ENCODE measurements at regions of chr3 and their contacts with region 1.

Region 1: GRCh38 chr3:129003578-129004160 is 2.6 kb downstream of the EFCC1 start:
- DNase-seq: peak; percentile 46 to 70 (median 62)
- ATAC-seq: peak; percentile 94
- H3K4me3 ChIP-seq: no peak overlapping the region
- H3K4me3 Mint-ChIP-seq: peak overlapping the region; percentile 55 to 84 (median 72)
- H3K27ac ChIP-seq: no peak overlapping the region
- H3K27ac Mint-ChIP-seq: peak overlapping the region in 3 of 9 donors; percentile 19 to 72 (median 68)
- H3K4me1 ChIP-seq: peaks cover 5 to 33% of the 10 kb centered on the region in 2 donors
- H3K4me1 Mint-ChIP-seq: peaks cover 29 to 62% (median 52%) of the 10 kb centered on the region in 7 donors
- H3K27me3 ChIP-seq: peaks cover 5 to 8% of the 10 kb centered on the region in 2 donors
- H3K27me3 Mint-ChIP-seq: peaks cover 13 to 61% (median 24%) of the 10 kb centered on the region in 5 donors

Region 2: GRCh38 chr3:128993461-128994173 is 10.1 kb before region 1 on chr3 and contains the start of gene CFAP92:
- CTCF ChIA-PET with region 1: interaction called, 6 read pairs
- POLR2A ChIA-PET with region 1: interaction called, 236 read pairs
- intact Hi-C with region 1: loop called in 1 of 2 experiments (anchors 1 kb)
- DNase-seq: peak; percentile 84 to 90 (median 89)
- ATAC-seq: peak; percentile 99
- H3K4me3 ChIP-seq: peak within 1 kb of the TSS; percentile 57
- H3K4me3 Mint-ChIP-seq: peak within 1 kb of the TSS; percentile 71 to 87 (median 82)
- H3K27ac ChIP-seq: peak within 1 kb of the TSS; percentile 61
- H3K27ac Mint-ChIP-seq: peak within 1 kb of the TSS; percentile 56 to 91 (median 73)
- H3K4me1 ChIP-seq: peaks cover 6 to 28% of the 10 kb centered on the region in 2 donors
- H3K4me1 Mint-ChIP-seq: peaks cover 15 to 45% (median 34%) of the 10 kb centered on the region in 7 donors
- H3K27me3 ChIP-seq: no peaks in the 10 kb centered on the region
- H3K27me3 Mint-ChIP-seq: peaks cover 0 to 3% (median 0%) of the 10 kb centered on the region in 5 donors
- total RNA-seq, gene CFAP92: 0.10 to 1.4 (median 0.46) TPM